ENCODE measurements at regions of chr17 and their contacts with region 1.

Region 1: GRCh38 chr17:69414408-69415274 is at the start of gene MAP2K6:
- DNase-seq: peak; percentile 90
- ATAC-seq: peak; percentile 92
- H3K4me3 ChIP-seq: peak within 1 kb of the TSS; percentile 72
- H3K27ac ChIP-seq: peak within 1 kb of the TSS; percentile 29
- H3K4me1 ChIP-seq: peaks cover 36% of the 10 kb centered on the region
- H3K27me3 ChIP-seq: no peaks in the 10 kb centered on the region
- CTCF ChIP-seq: no peak
- total RNA-seq, gene MAP2K6: 8.4 and 12.2 TPM in 2 replicates

Region 2: DNA sequence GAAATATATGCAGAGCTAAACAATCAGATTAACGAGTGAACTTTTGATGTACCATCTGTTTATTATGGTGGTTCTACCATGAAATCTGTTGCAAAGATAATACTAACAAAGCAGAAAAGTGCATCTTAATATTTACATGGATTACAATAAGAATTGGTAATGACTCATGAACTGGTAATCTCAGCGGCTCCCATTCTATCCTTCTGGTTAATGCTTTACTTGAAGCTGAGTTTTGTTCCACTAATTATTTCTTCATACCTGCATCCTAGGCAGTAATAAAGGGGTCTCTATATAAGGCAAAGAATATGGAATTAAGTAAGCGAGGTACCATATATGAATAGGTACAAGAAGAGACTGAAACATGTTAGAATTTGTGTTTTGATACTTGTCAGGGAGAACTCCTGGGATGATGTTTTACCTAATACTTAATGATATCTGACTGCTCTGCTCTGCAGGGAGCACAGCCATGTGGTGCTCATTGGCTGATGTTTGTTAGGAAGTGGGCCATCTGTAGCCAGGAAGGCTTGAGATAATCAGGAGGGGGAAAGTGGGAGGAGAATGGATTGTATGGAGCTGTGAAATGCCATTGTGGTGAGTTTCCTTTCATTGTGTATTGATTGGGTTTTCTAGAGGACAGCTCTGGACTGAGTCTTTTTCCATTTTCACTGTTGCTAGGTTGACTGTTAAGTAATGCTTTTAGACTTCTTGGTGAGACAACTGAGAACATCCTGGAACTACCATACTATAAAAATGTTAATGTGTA is 52.4 kb after region 1 on chr17:
- CTCF ChIA-PET with region 1: no interaction called
- POLR2A ChIA-PET with region 1: no interaction called
- intact Hi-C with region 1: loop called (anchors 2 kb)
- DNase-seq: peak; percentile 42
- ATAC-seq: peak; percentile 52
- H3K4me3 ChIP-seq: no peak overlapping the region
- H3K27ac ChIP-seq: peak overlapping the region; percentile 35
- H3K4me1 ChIP-seq: peaks cover 27% of the 10 kb centered on the region
- H3K27me3 ChIP-seq: no peaks in the 10 kb centered on the region
- CTCF ChIP-seq: no peak

Region 3: DNA sequence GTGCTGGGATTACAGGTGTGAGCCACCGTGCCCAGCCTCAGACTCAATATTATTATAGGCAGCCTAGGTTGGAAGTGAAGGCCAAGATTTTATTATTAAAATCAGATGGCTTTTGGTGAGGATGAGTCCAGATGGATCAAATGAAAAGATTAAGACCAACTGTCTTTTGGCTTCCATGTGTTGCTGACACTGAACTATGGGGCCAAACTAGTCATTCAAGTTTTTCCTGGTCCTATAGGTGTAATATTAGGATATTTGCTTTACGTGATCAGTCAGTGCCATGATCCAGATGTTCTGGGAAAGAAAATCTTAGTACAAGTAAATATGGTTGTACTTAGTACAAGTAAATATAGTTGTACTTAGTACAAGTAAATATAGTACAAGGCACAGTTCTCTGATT is 140.4 kb after region 1 on chr17:
- CTCF ChIA-PET with region 1: interaction called, 12 read pairs
- POLR2A ChIA-PET with region 1: no interaction called
- intact Hi-C with region 1: no loop called
- DNase-seq: peak; percentile 25
- ATAC-seq: no peak
- H3K4me3 ChIP-seq: no peak overlapping the region
- H3K27ac ChIP-seq: no peak overlapping the region
- H3K4me1 ChIP-seq: peaks cover 22% of the 10 kb centered on the region
- H3K27me3 ChIP-seq: no peaks in the 10 kb centered on the region
- CTCF ChIP-seq: no peak